Head of caudate nucleus (tissue), 42 donors: ENCODE measurements at regions of chr9 and their contacts with region 1.

Region 1: DNA sequence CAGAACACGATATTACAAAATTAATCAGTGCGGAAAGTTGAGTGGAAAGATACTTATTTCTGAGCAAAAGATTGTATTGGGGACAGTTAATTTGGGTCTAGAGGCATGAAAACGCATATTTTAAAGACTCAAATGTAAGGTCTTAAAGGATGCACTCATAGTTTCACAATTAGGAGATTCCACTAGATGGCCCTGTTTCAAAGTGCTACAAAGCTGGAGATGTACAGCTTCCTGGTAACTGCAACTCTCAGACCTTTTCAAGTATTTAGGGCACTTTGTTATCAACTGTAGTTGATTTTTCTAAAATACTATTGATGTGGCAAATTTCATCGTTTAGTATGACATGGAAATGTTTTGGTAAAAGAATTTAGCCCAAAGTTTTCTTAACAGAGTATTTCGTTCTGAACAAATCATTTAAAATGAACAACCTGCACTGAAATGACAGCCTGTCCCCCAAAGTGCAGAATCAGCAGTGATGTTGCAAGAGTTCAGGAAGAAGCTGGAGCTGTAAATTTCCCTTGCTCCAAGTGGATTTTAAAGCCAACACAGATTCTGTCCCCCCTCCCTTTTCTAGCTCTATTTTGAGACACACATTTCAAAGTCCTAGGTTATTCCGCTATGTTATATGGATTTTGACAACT is 16.2 kb upstream of the NDUFB6 start:
- DNase-seq: peak in 7 of 42 donors; percentile 9 to 55 (median 19)

Region 2: DNA sequence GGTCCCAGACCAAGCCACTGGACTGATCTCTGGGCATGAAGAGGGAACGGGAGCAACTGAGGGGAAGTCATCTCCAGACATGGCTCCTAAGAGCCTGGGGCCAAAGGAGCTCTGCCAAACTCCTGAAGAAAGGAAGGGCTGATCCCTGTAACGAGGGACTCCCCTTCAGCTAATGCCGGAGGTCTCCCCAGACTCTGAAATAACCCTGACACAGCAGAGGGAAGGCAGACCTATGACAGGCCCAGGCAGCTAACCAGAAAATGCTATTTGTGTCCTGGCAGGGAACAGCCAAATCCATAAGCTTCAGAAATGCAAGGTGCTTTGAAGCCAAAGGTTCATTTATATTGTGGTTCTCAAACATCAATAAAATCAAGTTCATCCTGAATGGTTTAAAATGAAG is 381.4 kb after region 1 on chr9:
- intact Hi-C with region 1: loop called (anchors 5 kb)
- DNase-seq: no peak